ENCODE measurements at regions of chr6 and their contacts with region 1.

Region 1: DNA sequence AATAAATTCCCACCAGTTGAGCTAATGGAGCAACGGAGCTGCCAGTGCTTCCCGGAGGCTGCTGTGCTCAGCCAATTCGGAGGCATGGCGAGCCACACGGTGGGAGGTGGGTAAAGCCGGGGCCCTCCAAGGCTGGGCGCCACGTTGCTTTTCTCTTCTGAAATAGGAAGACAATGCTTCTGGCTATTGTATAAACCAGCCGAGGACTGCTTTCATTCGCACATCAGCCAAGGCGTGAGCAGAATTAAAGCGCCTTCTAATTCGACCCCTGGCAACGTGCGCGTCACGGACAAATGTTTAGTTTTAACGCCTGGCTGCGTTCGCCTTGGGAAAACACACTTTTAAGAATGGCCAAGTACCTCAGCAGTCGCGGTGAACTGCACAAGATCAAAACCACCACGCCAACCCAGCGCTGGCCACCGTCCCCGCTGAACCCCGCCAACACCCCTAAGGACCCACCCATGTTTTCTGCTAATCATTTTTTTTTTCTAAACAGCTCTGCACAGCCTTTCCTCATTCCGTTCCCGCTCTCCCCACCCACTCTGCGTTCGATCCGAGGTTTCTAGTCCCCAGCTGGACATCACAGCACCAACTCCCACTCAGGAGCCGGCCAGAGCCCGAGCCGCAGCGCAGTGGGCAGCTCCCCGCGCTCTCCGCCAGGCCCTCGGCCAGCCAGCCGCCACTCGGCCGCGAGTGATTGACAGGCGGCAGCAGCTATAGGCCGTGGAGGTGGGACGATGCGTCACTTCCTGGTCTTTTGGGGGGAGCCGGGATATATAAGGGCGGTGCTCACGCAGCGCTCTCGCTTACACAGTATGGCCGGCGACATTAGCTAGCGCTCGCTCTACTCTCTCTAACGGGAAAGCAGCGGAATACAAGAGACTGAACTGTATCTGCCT is at the start of gene AMD1:
- DNase-seq: peak; percentile 87 to 93
- H3K4me3 ChIP-seq: peak within 1 kb of the TSS; percentile 81 to 95 (median 90)
- H3K27ac ChIP-seq: peak within 1 kb of the TSS; percentile 91
- H3K4me1 ChIP-seq: peaks cover 0 to 4% (median 0%) of the 10 kb centered on the region in 4 experiments; a peak in 3 of 7 replicates
- H3K27me3 ChIP-seq: no peaks in the 10 kb centered on the region
- CTCF ChIP-seq: no peak
- EP300 ChIP-seq: no peak
- POLR2A ChIP-seq: peak; percentile 99 to 100
- RAD21 ChIP-seq: no peak
- total RNA-seq, gene AMD1: 174 and 177 TPM in 2 replicates

Region 2: DNA sequence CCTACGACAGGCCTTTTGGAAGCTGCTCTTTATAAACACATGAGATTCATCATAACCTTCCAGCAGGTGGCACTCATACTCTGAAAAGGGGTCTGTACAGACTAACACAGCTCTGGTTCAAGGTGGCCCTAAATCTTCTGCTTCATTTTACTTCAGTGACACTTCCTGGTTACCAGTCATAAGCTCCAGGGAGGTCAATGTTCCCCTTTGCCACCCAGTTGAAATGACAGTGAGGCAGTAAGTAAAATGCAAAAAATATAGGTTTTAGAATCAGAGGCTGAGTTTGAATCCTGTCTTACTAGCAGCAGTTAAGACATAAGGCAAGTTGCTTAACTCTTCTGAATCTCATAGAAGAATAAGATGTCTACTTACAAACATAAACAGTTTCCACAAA is 191.8 kb before region 1 on chr6:
- CTCF ChIA-PET with region 1: interaction called, 7 read pairs
- POLR2A ChIA-PET with region 1: interaction called, 17 read pairs
- DNase-seq: no peak
- H3K4me3 ChIP-seq: no peak overlapping the region
- H3K27ac ChIP-seq: no peak overlapping the region
- H3K4me1 ChIP-seq: no peaks in the 10 kb centered on the region
- H3K27me3 ChIP-seq: no peaks in the 10 kb centered on the region
- CTCF ChIP-seq: peak in 2 of 3 experiments; percentile 67 to 68; a peak in 3 of 4 replicates
- EP300 ChIP-seq: no peak
- POLR2A ChIP-seq: no peak
- RAD21 ChIP-seq: peak; percentile 90

Region 3: DNA sequence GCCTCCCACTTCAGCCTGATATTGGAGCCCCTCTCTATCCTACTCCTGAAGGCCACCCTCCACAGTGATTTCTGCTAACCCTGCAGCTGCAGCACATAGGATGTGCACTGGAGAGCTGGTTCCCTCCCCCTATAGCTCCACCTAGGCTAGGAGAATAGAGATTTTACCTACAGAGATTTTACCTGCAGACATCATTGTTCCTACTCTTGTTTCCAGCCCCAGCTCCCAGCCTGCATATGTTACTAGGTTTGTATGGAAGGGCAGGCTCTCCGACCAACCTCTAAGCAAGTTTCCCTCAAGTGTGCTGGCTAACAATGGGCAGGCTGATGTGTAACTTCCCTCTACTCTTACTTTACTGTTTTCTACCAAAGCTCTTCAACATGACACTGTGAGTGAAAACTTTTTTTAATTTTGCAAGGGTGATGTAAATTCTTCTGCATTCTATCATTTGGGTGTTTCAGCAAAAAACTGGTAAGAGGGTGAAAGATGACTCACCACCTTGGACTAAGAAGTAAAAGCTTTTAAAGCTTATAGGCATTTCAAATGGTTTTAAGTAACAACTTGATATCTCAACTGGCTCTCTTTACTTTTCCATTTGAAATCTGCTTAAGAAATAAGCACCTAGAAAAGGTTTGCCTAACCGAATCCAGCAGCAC is 165.8 kb before region 1 on chr6:
- CTCF ChIA-PET with region 1: no interaction called
- POLR2A ChIA-PET with region 1: interaction called, 19 read pairs
- DNase-seq: no peak
- H3K4me3 ChIP-seq: no peak overlapping the region; a peak in 1 of 8 replicates
- H3K27ac ChIP-seq: no peak overlapping the region
- H3K4me1 ChIP-seq: peaks cover 0 to 6% (median 0%) of the 10 kb centered on the region in 4 experiments; a peak in 2 of 7 replicates
- H3K27me3 ChIP-seq: no peaks in the 10 kb centered on the region
- CTCF ChIP-seq: no peak
- EP300 ChIP-seq: no peak
- POLR2A ChIP-seq: no peak
- RAD21 ChIP-seq: no peak

Region 4: DNA sequence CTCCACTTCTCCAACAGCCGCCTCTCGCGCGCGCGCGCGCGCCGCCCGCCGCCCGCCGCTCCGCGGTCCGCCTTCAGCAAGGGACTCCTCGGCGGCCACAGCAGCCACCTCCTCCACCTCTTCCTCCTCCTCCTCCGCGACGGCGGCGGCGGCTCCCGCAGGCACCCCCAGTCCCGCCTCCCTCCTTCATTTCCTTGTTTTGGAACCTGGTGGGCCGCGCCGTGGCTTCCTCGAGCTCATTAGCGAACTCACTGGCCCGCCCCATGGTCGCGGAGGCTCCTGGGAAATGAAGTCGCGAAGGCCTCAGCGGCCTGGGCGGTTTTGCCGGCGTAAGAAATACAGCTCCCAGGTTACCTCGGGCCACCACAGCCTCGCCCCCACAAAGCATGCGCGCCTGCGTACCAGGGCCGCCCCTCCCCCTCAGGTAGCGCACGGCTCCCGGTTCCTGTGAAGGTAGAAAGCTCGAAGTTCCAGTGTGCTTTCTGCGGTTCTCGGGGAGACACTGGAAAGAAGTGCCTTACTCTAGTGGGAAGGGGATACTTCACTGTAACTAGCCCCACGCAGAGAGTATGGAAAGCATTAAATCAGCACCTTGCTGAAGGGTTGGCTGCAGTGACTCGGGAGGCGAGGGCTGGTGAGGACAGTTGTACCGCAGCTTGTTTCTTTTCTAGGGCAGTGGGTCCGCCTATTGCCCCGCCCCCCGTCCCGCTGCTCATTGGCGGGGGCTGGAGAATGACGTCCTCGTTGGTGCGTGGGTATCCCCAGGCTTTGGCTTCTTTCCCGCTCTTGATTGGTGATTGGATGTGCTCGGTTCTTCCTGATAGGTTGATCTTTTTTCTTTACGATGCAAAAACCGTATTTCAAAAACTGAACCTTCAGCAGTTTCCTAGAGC is 58.8 kb before region 1 on chr6 and contains the start of gene CDK19:
- CTCF ChIA-PET with region 1: interaction called, 7 read pairs
- POLR2A ChIA-PET with region 1: interaction called, 344 read pairs
- DNase-seq: peak; percentile 96 to 97
- H3K4me3 ChIP-seq: peak within 1 kb of the TSS; percentile 84 to 95 (median 92)
- H3K27ac ChIP-seq: peak within 1 kb of the TSS; percentile 99
- H3K4me1 ChIP-seq: peaks cover 0 to 3% (median 1%) of the 10 kb centered on the region in 4 experiments; a peak in 4 of 7 replicates
- H3K27me3 ChIP-seq: no peaks in the 10 kb centered on the region
- CTCF ChIP-seq: no peak
- EP300 ChIP-seq: no peak; a peak in 1 of 3 replicates
- POLR2A ChIP-seq: peak; percentile 90 to 99
- RAD21 ChIP-seq: no peak
- total RNA-seq, gene CDK19: 9.7 and 12.6 TPM in 2 replicates

Region 5: GRCh38 chr6:110859335-110859792 is 14.9 kb before region 1 on chr6:
- CTCF ChIA-PET with region 1: interaction called, 7 read pairs
- POLR2A ChIA-PET with region 1: interaction called, 179 read pairs
- DNase-seq: no peak
- H3K4me3 ChIP-seq: no peak overlapping the region
- H3K27ac ChIP-seq: no peak overlapping the region
- H3K4me1 ChIP-seq: no peaks in the 10 kb centered on the region
- H3K27me3 ChIP-seq: no peaks in the 10 kb centered on the region
- CTCF ChIP-seq: no peak
- EP300 ChIP-seq: no peak
- POLR2A ChIP-seq: no peak
- RAD21 ChIP-seq: no peak

Region 6: DNA sequence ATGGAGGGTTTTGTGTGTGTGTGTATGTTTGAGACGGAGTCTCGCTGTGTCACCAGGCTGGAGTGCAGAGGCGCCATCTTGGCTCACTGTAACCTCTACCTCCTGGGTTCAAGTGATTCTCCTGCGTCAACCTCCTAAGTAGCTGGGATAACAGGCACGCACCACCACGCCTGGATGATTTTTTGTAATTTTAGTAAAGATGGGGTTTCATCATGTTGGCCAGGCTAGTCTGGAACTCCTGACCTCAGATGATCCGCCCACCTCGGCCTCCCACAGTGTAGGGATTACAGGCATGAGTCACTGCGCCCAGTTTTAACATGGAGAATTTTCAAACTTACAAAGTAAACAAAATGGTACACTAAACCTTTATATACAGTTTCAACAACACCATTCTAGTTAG is 23.2 kb after region 1 on chr6:
- CTCF ChIA-PET with region 1: interaction called, 19 read pairs
- POLR2A ChIA-PET with region 1: interaction called, 172 read pairs
- DNase-seq: no peak
- H3K4me3 ChIP-seq: no peak overlapping the region
- H3K27ac ChIP-seq: no peak overlapping the region
- H3K4me1 ChIP-seq: no peaks in the 10 kb centered on the region
- H3K27me3 ChIP-seq: no peaks in the 10 kb centered on the region
- CTCF ChIP-seq: no peak
- EP300 ChIP-seq: no peak
- POLR2A ChIP-seq: no peak
- RAD21 ChIP-seq: no peak

Region 7: GRCh38 chr6:110971468-110971867 is 97.2 kb after region 1 on chr6:
- CTCF ChIA-PET with region 1: no interaction called
- POLR2A ChIA-PET with region 1: interaction called, 10 read pairs
- DNase-seq: no peak
- H3K4me3 ChIP-seq: no peak overlapping the region
- H3K27ac ChIP-seq: no peak overlapping the region
- H3K4me1 ChIP-seq: no peaks in the 10 kb centered on the region
- H3K27me3 ChIP-seq: no peaks in the 10 kb centered on the region
- CTCF ChIP-seq: no peak
- EP300 ChIP-seq: no peak
- POLR2A ChIP-seq: no peak
- RAD21 ChIP-seq: no peak